GM12878 (cell line): ENCODE measurements at regions of chr2 and their contacts with region 1.

Region 1: DNA sequence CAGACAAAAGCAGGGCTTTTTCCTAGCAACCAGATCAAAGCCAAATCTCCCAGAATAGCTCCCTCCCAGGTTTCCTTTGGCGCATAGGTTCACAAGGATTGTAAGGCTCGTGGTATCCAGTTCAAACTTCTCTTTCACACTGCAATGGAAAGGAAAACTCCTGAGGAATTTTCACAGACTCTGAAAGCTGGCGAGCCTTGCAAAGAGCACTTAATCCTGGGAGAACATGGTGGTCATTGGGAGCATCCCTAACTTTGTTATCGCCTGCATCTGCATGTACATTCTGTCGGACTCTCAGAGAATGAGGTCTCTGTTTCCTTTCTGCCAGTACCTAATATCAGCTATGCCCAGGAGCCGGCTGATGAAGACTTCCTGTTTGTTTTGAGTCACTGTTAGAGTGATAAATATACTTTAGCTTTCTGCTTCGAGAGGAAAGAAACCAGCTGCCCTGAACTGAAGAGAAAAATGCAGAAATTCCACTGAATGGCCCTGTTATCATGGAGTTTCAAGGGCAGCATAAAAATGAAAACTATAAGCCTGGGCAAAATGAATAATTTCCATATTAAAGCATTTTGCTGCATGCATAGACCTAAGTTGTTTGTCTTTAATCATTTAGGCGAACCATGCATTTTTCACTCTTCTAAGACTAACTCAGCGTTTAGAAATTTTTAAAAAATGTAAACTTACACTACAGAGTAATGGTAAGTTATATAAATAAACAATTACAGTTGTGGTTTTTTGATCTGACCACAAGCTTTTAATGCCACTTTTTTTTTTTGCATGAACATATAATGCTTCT is 76.4 kb upstream of the ZEB2 start:
- DNase-seq: no peak
- ATAC-seq: peak; percentile 79
- H3K4me3 ChIP-seq: 0 out of 2 replicates have a peak overlapping the region, but pooled peaks have one; percentile 14
- H3K27ac ChIP-seq: no peak overlapping the region
- H3K4me1 ChIP-seq: peaks cover 7% of the 10 kb centered on the region; the same call in 1 of the 2 replicates
- H3K27me3 ChIP-seq: peaks cover 0 to 8% of the 10 kb centered on the region in 2 experiments; a peak in 1 of 4 replicates
- CTCF ChIP-seq: no peak
- EP300 ChIP-seq: no peak
- POLR2A ChIP-seq: no peak
- RAD21 ChIP-seq: no peak

Region 2: DNA sequence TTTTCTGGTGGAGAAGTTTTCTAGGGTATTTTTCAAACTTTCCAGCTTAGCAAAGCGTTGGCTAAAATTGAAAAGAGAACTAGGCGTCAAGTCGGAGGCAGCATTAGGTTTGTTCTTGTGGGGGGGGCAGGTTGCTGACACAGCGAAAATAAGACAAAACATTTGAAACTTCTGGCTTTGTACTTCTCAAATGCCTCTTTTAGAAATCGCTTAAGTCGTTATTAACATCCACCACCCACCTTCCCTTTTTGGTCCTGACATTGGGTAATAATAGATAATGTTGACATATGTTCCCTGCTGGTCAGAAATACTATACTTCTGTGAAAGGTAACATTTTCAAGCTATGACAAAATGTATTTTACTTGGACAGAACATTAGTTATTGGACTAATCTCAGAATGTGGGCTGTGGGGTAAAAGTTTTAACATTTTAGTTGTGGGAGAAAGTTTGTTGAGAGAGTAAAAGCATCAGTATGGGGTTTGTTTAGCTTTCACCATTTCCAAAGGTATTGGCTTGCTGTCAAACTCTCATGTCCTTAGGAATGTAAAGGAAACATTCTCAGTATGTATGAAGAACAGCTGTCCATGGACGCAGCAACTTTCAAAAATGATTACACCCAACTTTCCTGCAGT is 11.7 kb after region 1 on chr2:
- CTCF ChIA-PET with region 1: no interaction called
- POLR2A ChIA-PET with region 1: no interaction called
- RAD21 ChIA-PET with region 1: no interaction called
- SMC1A ChIA-PET with region 1: interaction called, 10 read pairs
- in situ Hi-C with region 1: no loop called
- intact Hi-C with region 1: no loop called
- DNase-seq: no peak
- ATAC-seq: no peak
- H3K4me3 ChIP-seq: no peak overlapping the region
- H3K27ac ChIP-seq: no peak overlapping the region; the same call in 1 of the 2 replicates
- H3K4me1 ChIP-seq: no peaks in the 10 kb centered on the region
- H3K27me3 ChIP-seq: peaks cover 2% of the 10 kb centered on the region in 2 experiments; a peak in 1 of 4 replicates
- CTCF ChIP-seq: no peak
- EP300 ChIP-seq: no peak
- POLR2A ChIP-seq: no peak
- RAD21 ChIP-seq: no peak